ENCODE measurements at regions of chr3 and their contacts with region 1.

Region 1: GRCh38 chr3:165624761-165625160 is 212.5 kb downstream of the BCHE start:
- DNase-seq: no peak
- ATAC-seq: no peak

Region 2: GRCh38 chr3:165607221-165607620 is 17.5 kb before region 1 on chr3:
- intact Hi-C with region 1: loop called (anchors 1 kb)
- DNase-seq: no peak
- ATAC-seq: no peak

Measured in sciatic nerve (tissue), 2 donors.